CD8-positive, alpha-beta memory T cell (primary cell): ENCODE measurements at regions of chr12 and their contacts with region 1.

Region 1: DNA sequence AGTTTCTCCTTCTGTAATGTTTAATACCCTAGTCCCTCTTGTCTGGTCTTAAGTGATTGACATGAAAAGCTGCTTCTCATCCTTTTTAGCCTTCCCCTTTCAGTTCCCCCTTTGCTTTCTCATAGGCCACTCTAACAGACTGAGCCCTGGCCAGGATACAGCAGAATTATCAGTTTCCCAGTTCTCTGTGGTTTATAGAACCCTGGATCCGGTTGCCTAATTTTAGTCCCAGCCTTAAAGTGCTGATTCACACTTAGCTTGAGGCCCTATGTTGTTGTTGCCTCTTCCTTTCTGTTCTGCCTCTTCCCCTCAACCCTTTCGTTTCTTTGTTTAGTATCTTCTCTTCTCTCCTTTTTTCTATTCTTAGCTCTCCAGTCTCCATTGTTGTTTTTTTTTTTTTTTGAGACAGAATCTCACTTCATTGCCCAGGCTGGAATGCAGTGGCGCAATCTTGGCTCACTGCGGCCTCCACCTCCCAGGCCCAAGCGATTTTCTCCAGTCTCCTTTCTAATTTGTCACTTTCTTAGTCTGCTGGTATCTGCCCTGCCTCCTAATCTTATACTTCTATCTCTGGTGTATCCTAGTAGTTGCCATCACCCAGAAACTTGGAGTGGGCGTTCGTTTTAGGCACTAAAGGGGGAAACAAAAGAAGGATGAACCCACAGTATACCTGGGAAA is 2.9 kb upstream of the BIN2 start:
- DNase-seq: no peak
- H3K4me3 ChIP-seq: no peak overlapping the region
- H3K4me3 Mint-ChIP-seq: peak overlapping the region; percentile 38 to 75 (median 58)
- H3K27ac ChIP-seq: peak overlapping the region; percentile 70
- H3K27ac Mint-ChIP-seq: peak overlapping the region; percentile 81 to 97 (median 88)
- H3K4me1 ChIP-seq: peaks cover 55% of the 10 kb centered on the region
- H3K4me1 Mint-ChIP-seq: peaks cover 67 to 82% (median 80%) of the 10 kb centered on the region in 3 donors
- H3K27me3 ChIP-seq: no peaks in the 10 kb centered on the region
- H3K27me3 Mint-ChIP-seq: no peaks in the 10 kb centered on the region

Region 2: DNA sequence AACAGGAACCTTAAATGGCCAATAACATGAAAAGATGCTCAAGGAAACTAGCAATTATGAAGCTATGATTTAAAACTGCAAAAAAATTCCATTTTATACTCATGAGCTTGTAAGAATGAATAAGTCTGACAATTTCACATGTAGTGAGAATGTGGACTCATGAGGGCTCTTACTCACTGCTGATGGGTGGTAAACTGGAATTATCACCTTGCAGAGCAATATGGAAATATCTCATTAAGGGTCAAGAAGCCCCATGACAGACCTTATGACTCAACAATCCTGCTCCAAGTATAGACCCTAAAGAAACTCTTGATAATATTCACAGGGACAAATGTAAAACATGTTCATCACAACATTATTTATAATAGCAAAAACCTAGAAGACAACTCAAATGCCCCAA is 33.2 kb before region 1 on chr12:
- CTCF ChIA-PET with region 1: no interaction called
- POLR2A ChIA-PET with region 1: interaction called, 12 read pairs
- DNase-seq: no peak
- H3K4me3 ChIP-seq: no peak overlapping the region
- H3K4me3 Mint-ChIP-seq: no peak overlapping the region
- H3K27ac ChIP-seq: no peak overlapping the region
- H3K27ac Mint-ChIP-seq: peak overlapping the region in 5 of 8 donors; percentile 14 to 88 (median 32)
- H3K4me1 ChIP-seq: peaks cover 8% of the 10 kb centered on the region
- H3K4me1 Mint-ChIP-seq: peaks cover 14 to 22% (median 17%) of the 10 kb centered on the region in 3 donors
- H3K27me3 ChIP-seq: no peaks in the 10 kb centered on the region
- H3K27me3 Mint-ChIP-seq: no peaks in the 10 kb centered on the region

Region 3: GRCh38 chr12:51361161-51362016 is 34.5 kb after region 1 on chr12:
- CTCF ChIA-PET with region 1: no interaction called
- POLR2A ChIA-PET with region 1: no interaction called
- DNase-seq: no peak
- H3K4me3 ChIP-seq: no peak overlapping the region
- H3K4me3 Mint-ChIP-seq: no peak overlapping the region
- H3K27ac ChIP-seq: no peak overlapping the region
- H3K27ac Mint-ChIP-seq: peak overlapping the region in 5 of 8 donors; percentile 12 to 45 (median 33)
- H3K4me1 ChIP-seq: no peaks in the 10 kb centered on the region
- H3K4me1 Mint-ChIP-seq: peaks cover 0 to 2% (median 0%) of the 10 kb centered on the region in 3 donors
- H3K27me3 ChIP-seq: no peaks in the 10 kb centered on the region
- H3K27me3 Mint-ChIP-seq: no peaks in the 10 kb centered on the region

Region 4: DNA sequence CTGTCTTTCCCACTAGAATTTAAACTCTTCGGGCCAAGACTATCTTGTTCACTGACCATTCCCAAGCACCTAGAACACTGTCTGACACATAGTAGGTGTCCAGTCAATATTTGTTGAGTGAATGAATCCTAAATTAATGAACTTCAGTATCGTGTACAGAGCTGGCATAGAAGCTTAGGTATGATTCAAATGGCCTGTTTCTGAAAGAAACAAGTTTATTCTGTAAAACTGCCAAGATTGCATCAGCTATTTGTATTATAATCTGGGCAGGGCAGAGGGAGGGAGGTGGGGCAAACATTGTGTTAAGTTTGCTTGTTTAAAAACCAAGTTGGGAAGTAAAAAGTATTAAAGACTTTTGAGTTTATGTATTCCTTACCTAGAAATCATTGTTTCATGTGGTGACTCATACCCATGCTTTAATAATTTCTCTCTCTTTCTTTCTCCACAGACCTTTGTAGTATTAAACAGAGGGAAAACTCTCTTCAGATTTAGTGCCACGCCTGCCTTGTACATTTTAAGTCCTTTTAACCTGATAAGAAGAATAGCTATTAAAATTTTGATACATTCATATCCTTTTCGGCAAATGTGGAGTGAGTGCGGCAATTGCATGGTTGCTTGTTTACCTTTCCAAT is 356.9 kb after region 1 on chr12:
- CTCF ChIA-PET with region 1: no interaction called
- POLR2A ChIA-PET with region 1: no interaction called
- DNase-seq: no peak
- H3K4me3 ChIP-seq: no peak overlapping the region
- H3K4me3 Mint-ChIP-seq: no peak overlapping the region
- H3K27ac ChIP-seq: no peak overlapping the region
- H3K27ac Mint-ChIP-seq: no peak overlapping the region
- H3K4me1 ChIP-seq: no peaks in the 10 kb centered on the region
- H3K4me1 Mint-ChIP-seq: peaks cover 0 to 6% (median 4%) of the 10 kb centered on the region in 3 donors
- H3K27me3 ChIP-seq: no peaks in the 10 kb centered on the region
- H3K27me3 Mint-ChIP-seq: peaks cover 5 to 12% of the 10 kb centered on the region in 2 donors